ENCODE measurements at regions of chr3 and their contacts with region 1.

Region 1: GRCh38 chr3:40452876-40453730 is 4.0 kb upstream of the RPL14 start:
- DNase-seq: peak; percentile 94 to 98 (median 95)
- H3K4me3 ChIP-seq: peak overlapping the region; percentile 73
- H3K4me3 Mint-ChIP-seq: peak overlapping the region; percentile 91 to 98 (median 96)
- H3K27ac ChIP-seq: peak overlapping the region; percentile 96
- H3K27ac Mint-ChIP-seq: peak overlapping the region; percentile 91 to 100 (median 99)
- H3K4me1 ChIP-seq: peaks cover 22% of the 10 kb centered on the region
- H3K4me1 Mint-ChIP-seq: peaks cover 30 to 44% (median 41%) of the 10 kb centered on the region in 3 donors
- H3K27me3 ChIP-seq: no peaks in the 10 kb centered on the region
- H3K27me3 Mint-ChIP-seq: no peaks in the 10 kb centered on the region

Region 2: GRCh38 chr3:40476478-40477470 is 23.7 kb after region 1 on chr3 and contains the start of gene ZNF619:
- CTCF ChIA-PET with region 1: no interaction called
- POLR2A ChIA-PET with region 1: interaction called, 14 read pairs
- DNase-seq: peak; percentile 42 to 71 (median 49)
- H3K4me3 ChIP-seq: peak within 1 kb of the TSS; percentile 84
- H3K4me3 Mint-ChIP-seq: peak within 1 kb of the TSS; percentile 91 to 98 (median 94)
- H3K27ac ChIP-seq: peak within 1 kb of the TSS; percentile 78
- H3K27ac Mint-ChIP-seq: peak within 1 kb of the TSS; percentile 83 to 99 (median 95)
- H3K4me1 ChIP-seq: peaks cover 16% of the 10 kb centered on the region
- H3K4me1 Mint-ChIP-seq: peaks cover 25 to 44% (median 27%) of the 10 kb centered on the region in 3 donors
- H3K27me3 ChIP-seq: no peaks in the 10 kb centered on the region
- H3K27me3 Mint-ChIP-seq: peaks cover 0 to 3% of the 10 kb centered on the region in 2 donors
- total RNA-seq, gene ZNF619: 7.7 to 9.6 TPM

Region 3: GRCh38 chr3:40497290-40497689 is 44.2 kb after region 1 on chr3:
- CTCF ChIA-PET with region 1: no interaction called
- POLR2A ChIA-PET with region 1: no interaction called
- DNase-seq: no peak
- H3K4me3 ChIP-seq: no peak overlapping the region
- H3K4me3 Mint-ChIP-seq: no peak overlapping the region
- H3K27ac ChIP-seq: no peak overlapping the region
- H3K27ac Mint-ChIP-seq: no peak overlapping the region
- H3K4me1 ChIP-seq: no peaks in the 10 kb centered on the region
- H3K4me1 Mint-ChIP-seq: no peaks in the 10 kb centered on the region
- H3K27me3 ChIP-seq: no peaks in the 10 kb centered on the region
- H3K27me3 Mint-ChIP-seq: no peaks in the 10 kb centered on the region

Region 4: DNA sequence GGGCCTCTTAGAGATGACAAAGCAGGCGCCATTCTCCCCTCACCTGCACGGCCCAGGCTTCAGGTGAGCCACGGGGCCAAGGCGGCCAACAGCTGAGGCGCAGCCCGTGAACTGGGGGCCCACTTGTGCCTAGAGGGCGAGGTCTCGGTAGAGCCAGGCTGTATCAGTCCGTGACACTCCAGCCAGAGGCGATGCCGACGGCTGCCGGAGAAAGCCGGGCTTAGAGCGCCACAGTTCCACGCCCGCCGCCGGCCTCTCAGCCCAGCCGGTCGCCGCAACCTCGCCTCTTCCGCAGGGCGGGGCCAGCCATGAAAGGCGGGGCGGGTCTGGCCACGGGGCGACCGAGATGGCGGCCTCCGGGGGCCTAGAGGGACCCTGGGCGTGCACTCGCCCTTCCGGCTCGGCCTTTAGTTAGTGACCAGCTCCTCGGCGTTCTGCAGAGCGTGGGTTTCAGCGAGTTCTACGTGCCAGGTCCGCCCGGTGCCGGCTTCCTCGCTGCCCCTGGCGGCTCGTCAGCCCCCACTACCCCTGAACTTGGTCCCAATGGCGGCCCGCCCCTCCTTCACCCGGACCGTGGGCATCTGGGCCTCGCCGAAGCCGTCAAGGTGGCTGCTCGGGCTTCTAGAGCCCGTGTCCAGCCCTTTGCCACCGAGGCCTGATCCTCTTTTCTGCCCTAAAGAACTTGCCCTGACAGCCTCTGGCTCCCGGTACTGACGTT is 71.6 kb after region 1 on chr3 and contains the start of gene ZNF621:
- CTCF ChIA-PET with region 1: interaction called, 4 read pairs
- POLR2A ChIA-PET with region 1: interaction called, 15 read pairs
- DNase-seq: peak; percentile 71 to 87 (median 77)
- H3K4me3 ChIP-seq: peak within 1 kb of the TSS; percentile 79
- H3K4me3 Mint-ChIP-seq: peak within 1 kb of the TSS; percentile 89 to 97 (median 95)
- H3K27ac ChIP-seq: peak within 1 kb of the TSS; percentile 86
- H3K27ac Mint-ChIP-seq: peak within 1 kb of the TSS; percentile 76 to 99 (median 98)
- H3K4me1 ChIP-seq: peaks cover 15% of the 10 kb centered on the region
- H3K4me1 Mint-ChIP-seq: peaks cover 24 to 40% (median 35%) of the 10 kb centered on the region in 3 donors
- H3K27me3 ChIP-seq: no peaks in the 10 kb centered on the region
- H3K27me3 Mint-ChIP-seq: no peaks in the 10 kb centered on the region
- total RNA-seq, gene ZNF621: 20.7 to 22.5 TPM

Measured in CD8-positive, alpha-beta memory T cell (primary cell).